Panc1 (cell line): ENCODE measurements at regions of chr9 and their contacts with region 1.

Region 1: GRCh38 chr9:124645274-124645673 is 125.8 kb downstream of the NR6A1 start:
- DNase-seq: no peak
- ATAC-seq: no peak
- H3K4me3 ChIP-seq: no peak overlapping the region
- H3K27ac ChIP-seq: no peak overlapping the region
- H3K4me1 ChIP-seq: no peaks in the 10 kb centered on the region
- H3K27me3 ChIP-seq: no peaks in the 10 kb centered on the region
- CTCF ChIP-seq: no peak

Region 2: DNA sequence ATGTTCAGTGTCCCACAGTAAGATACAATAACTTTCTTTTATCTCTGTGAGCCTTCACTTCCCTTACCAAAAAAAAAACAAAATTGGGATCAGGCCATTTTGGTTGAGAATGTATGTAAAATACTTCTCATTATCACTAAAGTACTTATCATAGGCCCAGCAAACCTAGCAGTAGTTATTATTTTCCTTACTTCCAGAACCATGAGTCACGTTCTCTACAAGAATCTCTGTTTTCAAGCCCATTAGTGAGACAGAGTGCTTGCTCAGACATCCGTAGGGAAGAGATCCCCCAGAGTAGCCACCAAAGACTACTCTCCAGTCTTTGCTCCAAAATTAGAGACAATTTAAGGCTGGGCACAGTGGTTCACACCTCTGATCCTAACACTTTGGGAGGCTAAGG is 34.2 kb before region 1 on chr9:
- CTCF ChIA-PET with region 1: no interaction called
- POLR2A ChIA-PET with region 1: interaction called, 17 read pairs
- in situ Hi-C with region 1: no loop called
- intact Hi-C with region 1: no loop called
- DNase-seq: no peak
- ATAC-seq: no peak
- H3K4me3 ChIP-seq: no peak overlapping the region
- H3K27ac ChIP-seq: no peak overlapping the region
- H3K4me1 ChIP-seq: peaks cover 5% of the 10 kb centered on the region; the same call in 1 of the 2 replicates
- H3K27me3 ChIP-seq: no peaks in the 10 kb centered on the region
- CTCF ChIP-seq: no peak